ENCODE measurements at regions of chr3 and their contacts with region 1.

Region 1: GRCh38 chr3:18758047-18758704 is 333.0 kb upstream of the SATB1 start:
- DNase-seq: peak in 7 of 9 donors; percentile 69 to 85 (median 79)
- ATAC-seq: peak; percentile 98
- H3K4me3 ChIP-seq: no peak overlapping the region
- H3K4me3 Mint-ChIP-seq: peak overlapping the region in 6 of 10 donors; percentile 2 to 45 (median 12)
- H3K27ac ChIP-seq: peak overlapping the region; percentile 15
- H3K27ac Mint-ChIP-seq: peak overlapping the region in 8 of 9 donors; percentile 61 to 88 (median 74)
- H3K4me1 ChIP-seq: peaks cover 4 to 29% of the 10 kb centered on the region in 2 donors
- H3K4me1 Mint-ChIP-seq: peaks cover 17 to 55% (median 45%) of the 10 kb centered on the region in 7 donors
- H3K27me3 ChIP-seq: no peaks in the 10 kb centered on the region
- H3K27me3 Mint-ChIP-seq: no peaks in the 10 kb centered on the region

Region 2: DNA sequence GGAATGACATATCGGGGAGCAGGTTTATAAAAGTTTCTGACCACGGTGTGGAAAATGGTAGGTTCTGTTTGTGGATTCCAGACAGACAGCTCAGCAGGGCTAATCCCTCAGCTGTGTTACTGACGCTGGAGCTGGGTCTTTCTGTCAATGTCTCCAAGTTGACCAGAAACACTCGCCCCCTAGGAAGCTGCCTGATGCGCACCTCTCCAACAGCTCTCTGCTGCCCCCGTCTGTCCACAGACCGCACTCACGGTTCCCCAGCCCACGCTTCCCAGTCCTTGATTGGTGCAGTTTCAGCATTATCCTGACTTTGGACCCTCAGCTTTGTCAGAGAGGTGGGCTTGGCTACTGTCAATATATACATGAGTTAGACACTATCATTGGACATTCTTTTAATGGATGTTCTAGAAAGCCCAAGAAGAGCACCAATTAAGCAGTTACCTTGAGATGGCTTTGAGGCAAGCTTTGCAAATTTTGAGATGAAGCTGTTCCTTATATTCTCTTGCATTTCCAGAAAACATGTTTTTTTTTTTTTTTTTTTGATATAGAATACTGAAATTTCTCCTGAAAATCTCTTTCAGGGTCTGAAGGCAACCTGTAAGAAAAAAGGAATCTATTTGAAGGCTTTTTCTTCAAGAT is 916.9 kb before region 1 on chr3:
- CTCF ChIA-PET with region 1: interaction called, 4 read pairs
- POLR2A ChIA-PET with region 1: no interaction called
- intact Hi-C with region 1: loop called in 1 of 2 experiments (anchors 5 kb)
- DNase-seq: peak; percentile 35 to 73 (median 57)
- ATAC-seq: peak; percentile 89
- H3K4me3 ChIP-seq: no peak overlapping the region
- H3K4me3 Mint-ChIP-seq: no peak overlapping the region
- H3K27ac ChIP-seq: no peak overlapping the region
- H3K27ac Mint-ChIP-seq: no peak overlapping the region
- H3K4me1 ChIP-seq: no peaks in the 10 kb centered on the region
- H3K4me1 Mint-ChIP-seq: peaks cover 0 to 2% (median 0%) of the 10 kb centered on the region in 7 donors
- H3K27me3 ChIP-seq: no peaks in the 10 kb centered on the region
- H3K27me3 Mint-ChIP-seq: peaks cover 0 to 8% (median 6%) of the 10 kb centered on the region in 5 donors

Region 3: DNA sequence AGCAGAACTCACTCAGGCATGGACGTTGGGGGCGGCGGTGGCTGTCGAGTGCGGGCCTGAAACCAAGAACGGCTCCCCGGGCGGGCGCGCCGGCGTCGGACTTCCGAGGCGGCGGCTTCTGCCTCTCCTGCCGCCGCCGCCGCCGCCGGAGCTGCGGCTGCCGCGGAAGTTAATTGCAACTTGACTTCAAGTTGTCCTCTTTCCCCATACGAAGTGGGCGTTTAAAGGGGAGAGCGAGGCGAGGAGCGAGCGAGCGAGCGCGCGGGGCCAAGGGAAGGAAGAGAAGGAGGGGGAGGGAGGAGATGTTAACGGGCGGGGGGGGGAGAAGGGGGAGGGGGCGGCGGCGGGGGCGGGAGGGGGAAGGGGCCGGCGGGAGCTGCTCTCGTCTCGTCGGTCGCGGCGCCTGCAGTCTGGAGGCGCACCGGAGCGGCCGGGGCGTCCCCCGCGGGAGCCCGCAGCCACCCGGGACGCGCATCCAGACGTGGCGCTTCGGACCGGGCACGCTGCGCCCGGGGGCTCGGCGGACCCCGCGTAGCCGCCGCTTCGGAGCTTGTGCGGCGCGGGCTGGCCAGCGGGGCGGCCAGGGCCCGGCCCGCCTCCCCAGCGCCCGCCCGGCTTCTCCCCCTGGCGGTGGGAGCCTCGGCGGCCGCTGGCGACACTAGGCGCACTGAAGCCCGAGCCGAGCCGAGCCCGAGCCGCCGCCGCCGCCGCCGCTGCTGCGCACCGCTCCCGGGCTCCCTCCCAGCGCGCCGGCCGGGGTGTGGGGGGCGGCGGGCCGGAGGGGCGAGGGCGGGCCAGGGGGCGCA is 313.4 kb before region 1 on chr3:
- CTCF ChIA-PET with region 1: interaction called, 6 read pairs
- POLR2A ChIA-PET with region 1: interaction called, 27 read pairs
- intact Hi-C with region 1: loop called (anchors 1 kb)
- DNase-seq: peak; percentile 80 to 91 (median 87)
- ATAC-seq: peak; percentile 80
- H3K4me3 ChIP-seq: peak overlapping the region; percentile 99
- H3K4me3 Mint-ChIP-seq: peak overlapping the region; percentile 92 to 100 (median 96)
- H3K27ac ChIP-seq: peak overlapping the region; percentile 97
- H3K27ac Mint-ChIP-seq: peak overlapping the region; percentile 94 to 99 (median 98)
- H3K4me1 ChIP-seq: peaks cover 11 to 19% of the 10 kb centered on the region in 2 donors
- H3K4me1 Mint-ChIP-seq: peaks cover 19 to 52% (median 39%) of the 10 kb centered on the region in 7 donors
- H3K27me3 ChIP-seq: no peaks in the 10 kb centered on the region
- H3K27me3 Mint-ChIP-seq: no peaks in the 10 kb centered on the region

Region 4: GRCh38 chr3:18489939-18490338 is 268.2 kb before region 1 on chr3:
- CTCF ChIA-PET with region 1: no interaction called
- POLR2A ChIA-PET with region 1: no interaction called
- intact Hi-C with region 1: no loop called
- DNase-seq: peak in 7 of 9 donors; percentile 6 to 40 (median 16)
- ATAC-seq: peak; percentile 24
- H3K4me3 ChIP-seq: peak overlapping the region; percentile 3
- H3K4me3 Mint-ChIP-seq: peak overlapping the region in 7 of 10 donors; percentile 39 to 77 (median 64)
- H3K27ac ChIP-seq: no peak overlapping the region
- H3K27ac Mint-ChIP-seq: peak overlapping the region in 8 of 9 donors; percentile 12 to 92 (median 54)
- H3K4me1 ChIP-seq: peaks cover 10 to 11% of the 10 kb centered on the region in 2 donors
- H3K4me1 Mint-ChIP-seq: peaks cover 15 to 55% (median 32%) of the 10 kb centered on the region in 7 donors
- H3K27me3 ChIP-seq: no peaks in the 10 kb centered on the region
- H3K27me3 Mint-ChIP-seq: no peaks in the 10 kb centered on the region

Region 5: DNA sequence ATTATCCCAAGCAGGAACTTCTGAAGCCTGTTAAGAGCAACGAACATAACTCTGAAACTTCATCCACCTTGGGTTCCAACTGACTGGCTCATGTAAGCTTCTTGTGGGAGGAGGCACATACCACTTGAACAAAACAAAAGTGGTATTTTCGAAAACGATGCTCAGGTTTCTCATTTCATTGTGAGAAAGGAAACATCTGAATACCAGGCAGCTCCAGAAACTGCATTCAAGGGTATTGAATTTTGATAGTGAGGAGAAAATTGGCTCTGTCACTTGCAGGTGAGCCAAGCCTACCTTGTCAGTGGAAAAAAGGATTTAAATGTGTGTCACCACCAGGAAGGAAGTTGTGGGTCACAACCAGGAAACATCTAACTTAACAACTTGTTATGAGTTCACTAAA is 114.9 kb before region 1 on chr3:
- CTCF ChIA-PET with region 1: interaction called, 7 read pairs
- POLR2A ChIA-PET with region 1: interaction called, 4 read pairs
- intact Hi-C with region 1: loop called in 1 of 2 experiments (anchors 5 kb)
- DNase-seq: peak in 4 of 9 donors; percentile 10 to 29 (median 14)
- ATAC-seq: no peak
- H3K4me3 ChIP-seq: no peak overlapping the region
- H3K4me3 Mint-ChIP-seq: peak overlapping the region in 9 of 10 donors; percentile 43 to 71 (median 58)
- H3K27ac ChIP-seq: no peak overlapping the region
- H3K27ac Mint-ChIP-seq: peak overlapping the region; percentile 45 to 90 (median 65)
- H3K4me1 ChIP-seq: peaks cover 18 to 24% of the 10 kb centered on the region in 2 donors
- H3K4me1 Mint-ChIP-seq: peaks cover 31 to 65% (median 50%) of the 10 kb centered on the region in 7 donors
- H3K27me3 ChIP-seq: no peaks in the 10 kb centered on the region
- H3K27me3 Mint-ChIP-seq: no peaks in the 10 kb centered on the region

Region 6: GRCh38 chr3:18717598-18717997 is 40.6 kb before region 1 on chr3:
- CTCF ChIA-PET with region 1: interaction called, 5 read pairs
- POLR2A ChIA-PET with region 1: interaction called, 4 read pairs
- intact Hi-C with region 1: loop called (anchors 1 kb)
- DNase-seq: peak in 1 of 9 donors; percentile 14
- ATAC-seq: no peak
- H3K4me3 ChIP-seq: no peak overlapping the region
- H3K4me3 Mint-ChIP-seq: peak overlapping the region in 8 of 10 donors; percentile 28 to 78 (median 60)
- H3K27ac ChIP-seq: no peak overlapping the region
- H3K27ac Mint-ChIP-seq: peak overlapping the region; percentile 20 to 95 (median 77)
- H3K4me1 ChIP-seq: peaks cover 43 to 50% of the 10 kb centered on the region in 2 donors
- H3K4me1 Mint-ChIP-seq: peaks cover 50 to 85% (median 71%) of the 10 kb centered on the region in 7 donors
- H3K27me3 ChIP-seq: no peaks in the 10 kb centered on the region
- H3K27me3 Mint-ChIP-seq: no peaks in the 10 kb centered on the region

Region 7: GRCh38 chr3:18778598-18778997 is 20.4 kb after region 1 on chr3:
- CTCF ChIA-PET with region 1: interaction called, 4 read pairs
- POLR2A ChIA-PET with region 1: interaction called, 3 read pairs
- intact Hi-C with region 1: loop called in 1 of 2 experiments (anchors 2 kb)
- DNase-seq: peak in 6 of 9 donors; percentile 39 to 65 (median 56)
- ATAC-seq: peak; percentile 73
- H3K4me3 ChIP-seq: peak overlapping the region; percentile 18
- H3K4me3 Mint-ChIP-seq: peak overlapping the region; percentile 2 to 77 (median 71)
- H3K27ac ChIP-seq: peak overlapping the region; percentile 39
- H3K27ac Mint-ChIP-seq: peak overlapping the region; percentile 56 to 86 (median 73)
- H3K4me1 ChIP-seq: peaks cover 5 to 32% of the 10 kb centered on the region in 2 donors
- H3K4me1 Mint-ChIP-seq: peaks cover 18 to 84% (median 67%) of the 10 kb centered on the region in 7 donors
- H3K27me3 ChIP-seq: no peaks in the 10 kb centered on the region
- H3K27me3 Mint-ChIP-seq: no peaks in the 10 kb centered on the region

Measured in naive thymus-derived CD4-positive, alpha-beta T cell (primary cell).